ENCODE measurements at regions of chr14 and their contacts with region 1.

Region 1: DNA sequence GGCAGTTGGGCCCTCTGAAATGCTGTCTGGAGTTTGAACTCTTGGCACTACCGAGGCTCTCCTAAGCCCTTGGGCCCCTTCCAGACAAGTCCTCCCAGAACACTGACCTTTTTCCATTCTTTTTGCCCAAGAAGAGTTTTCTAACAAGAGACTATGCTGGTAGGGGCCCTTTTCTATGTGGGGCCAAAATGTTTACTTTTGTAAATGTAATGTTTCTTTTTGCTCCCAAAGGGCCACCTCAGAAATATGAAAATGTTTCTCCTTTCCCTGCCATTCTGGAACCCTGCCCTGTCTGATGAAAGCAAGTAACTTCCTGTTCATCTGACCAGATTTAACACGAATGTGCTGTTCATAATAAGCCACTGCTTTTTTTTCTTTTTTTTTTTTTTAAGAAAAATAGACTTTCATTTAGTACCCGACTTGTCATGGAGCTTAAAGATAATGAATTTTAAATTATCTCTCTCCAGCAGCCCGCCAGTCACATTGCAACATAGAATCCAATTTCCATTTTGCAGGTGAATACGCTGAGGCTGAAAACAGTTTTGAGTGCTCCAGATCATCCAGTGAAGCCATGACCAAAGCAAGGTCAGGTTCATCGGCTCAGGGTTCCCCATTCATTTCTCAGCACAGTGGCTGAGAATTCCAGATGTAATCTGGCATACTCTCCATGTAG is 169.9 kb downstream of the DPF3 start:
- DNase-seq: no peak
- ATAC-seq: peak; percentile 47
- H3K4me3 ChIP-seq: no peak overlapping the region
- H3K27ac ChIP-seq: peak overlapping the region; percentile 82 to 84
- H3K4me1 ChIP-seq: no peaks in the 10 kb centered on the region
- H3K27me3 ChIP-seq: no peaks in the 10 kb centered on the region

Region 2: GRCh38 chr14:72812292-72812911 is 88.4 kb after region 1 on chr14:
- intact Hi-C with region 1: loop called in 1 of 2 experiments (anchors 2 kb)
- DNase-seq: peak; percentile 83 to 87
- ATAC-seq: peak; percentile 85
- H3K4me3 ChIP-seq: no peak overlapping the region
- H3K27ac ChIP-seq: peak overlapping the region; percentile 20 to 93
- H3K4me1 ChIP-seq: no peaks in the 10 kb centered on the region
- H3K27me3 ChIP-seq: no peaks in the 10 kb centered on the region

Measured in aorta (tissue), 5 donors.